Activated naive CD8-positive, alpha-beta T cell treated with anti-CD3 and anti-CD28 coated beads, Interleukin-2, amount 10 ng/mL, durations not matched to agents 7 days and 5 days (primary cell): ENCODE measurements at regions of chr21 and their contacts with region 1.

Region 1: DNA sequence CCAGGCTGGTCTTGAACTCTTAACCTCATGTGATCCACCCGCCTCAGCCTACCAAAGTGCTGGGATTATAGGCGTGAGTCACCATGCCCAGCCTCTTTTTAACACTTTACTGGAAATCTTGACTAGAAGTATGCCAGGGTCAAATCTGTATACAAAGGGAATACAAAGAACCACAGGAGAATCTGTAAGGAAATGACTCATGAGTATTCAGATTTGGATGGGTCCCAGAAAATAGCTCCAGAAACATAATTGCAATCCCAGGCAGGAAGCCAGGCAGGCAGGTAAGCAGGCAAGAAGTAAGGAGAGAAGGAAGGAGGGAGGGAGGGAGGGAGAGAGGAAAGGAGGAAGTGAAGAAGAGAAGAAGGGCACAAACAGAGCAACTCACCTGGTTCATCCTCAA is 22.8 kb upstream of the TIAM1 start:
- DNase-seq: no peak
- ATAC-seq: no peak
- H3K4me3 Mint-ChIP-seq: no peak overlapping the region
- H3K27ac Mint-ChIP-seq: no peak overlapping the region
- H3K4me1 Mint-ChIP-seq: peaks cover 40% of the 10 kb centered on the region
- H3K27me3 Mint-ChIP-seq: no peaks in the 10 kb centered on the region

Region 2: GRCh38 chr21:31354604-31355443 is 12.0 kb before region 1 on chr21:
- POLR2A ChIA-PET with region 1: interaction called, 35 read pairs
- DNase-seq: peak; percentile 70
- ATAC-seq: peak; percentile 95
- H3K4me3 Mint-ChIP-seq: peak overlapping the region; percentile 43
- H3K27ac Mint-ChIP-seq: peak overlapping the region; percentile 85
- H3K4me1 Mint-ChIP-seq: peaks cover 35% of the 10 kb centered on the region
- H3K27me3 Mint-ChIP-seq: no peaks in the 10 kb centered on the region

Region 3: DNA sequence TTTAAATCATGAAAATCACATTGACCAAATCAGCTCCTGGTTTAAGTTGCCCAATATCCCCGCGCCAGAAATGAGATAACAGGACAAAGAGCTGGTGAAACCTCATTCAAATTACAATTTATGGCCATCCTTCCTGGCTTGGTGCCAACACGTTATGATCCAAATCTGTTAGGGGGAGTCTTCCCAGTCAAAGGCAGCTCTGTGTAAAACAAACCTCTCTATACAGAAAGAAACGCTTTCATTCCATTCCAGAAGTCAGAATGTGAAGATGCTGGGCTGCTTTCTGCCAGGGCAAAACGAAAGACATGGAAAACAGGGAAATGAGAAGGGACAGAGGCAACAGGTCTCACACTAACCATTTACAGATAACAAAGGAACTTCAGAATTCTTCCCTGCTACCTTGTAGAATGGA is 30.7 kb after region 1 on chr21:
- POLR2A ChIA-PET with region 1: interaction called, 12 read pairs
- DNase-seq: no peak
- ATAC-seq: no peak
- H3K4me3 Mint-ChIP-seq: peak overlapping the region; percentile 55
- H3K27ac Mint-ChIP-seq: no peak overlapping the region
- H3K4me1 Mint-ChIP-seq: peaks cover 46% of the 10 kb centered on the region
- H3K27me3 Mint-ChIP-seq: peaks cover 3% of the 10 kb centered on the region

Region 4: GRCh38 chr21:31457675-31458074 is 90.8 kb after region 1 on chr21:
- POLR2A ChIA-PET with region 1: interaction called, 10 read pairs
- DNase-seq: no peak
- ATAC-seq: no peak
- H3K4me3 Mint-ChIP-seq: no peak overlapping the region
- H3K27ac Mint-ChIP-seq: no peak overlapping the region
- H3K4me1 Mint-ChIP-seq: peaks cover 12% of the 10 kb centered on the region
- H3K27me3 Mint-ChIP-seq: peaks cover 9% of the 10 kb centered on the region

Region 5: GRCh38 chr21:31558962-31559367 is 192.1 kb after region 1 on chr21:
- POLR2A ChIA-PET with region 1: interaction called, 11 read pairs
- DNase-seq: peak; percentile 96
- ATAC-seq: peak; percentile 90
- H3K4me3 Mint-ChIP-seq: peak overlapping the region; percentile 97
- H3K27ac Mint-ChIP-seq: no peak overlapping the region
- H3K4me1 Mint-ChIP-seq: peaks cover 32% of the 10 kb centered on the region
- H3K27me3 Mint-ChIP-seq: peaks cover 21% of the 10 kb centered on the region